A549 (cell line): ENCODE measurements at regions of chr11 and their contacts with region 1.

Region 1: DNA sequence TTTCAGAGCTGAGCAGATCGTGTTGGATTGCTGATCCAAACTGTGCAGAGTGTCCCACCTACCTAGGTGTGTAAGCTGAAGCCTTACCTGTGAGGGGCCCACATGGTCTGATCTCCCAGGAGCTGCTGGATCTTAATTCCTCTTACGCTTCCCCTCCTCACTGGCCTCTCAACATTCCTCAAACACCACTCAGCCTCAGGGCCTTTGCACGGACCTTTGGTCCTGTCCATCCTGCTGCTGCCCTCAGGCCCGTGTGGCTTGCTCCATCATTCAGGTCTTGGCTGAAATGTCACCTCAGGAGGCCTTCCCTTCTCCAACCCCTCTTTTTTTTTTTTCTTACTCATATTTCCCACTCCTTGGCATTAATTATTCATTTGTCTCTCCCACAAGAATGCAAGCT is 21.1 kb upstream of the RAB1B start:
- DNase-seq: no peak
- ATAC-seq: no peak
- H3K4me3 ChIP-seq: no peak overlapping the region
- H3K27ac ChIP-seq: no peak overlapping the region
- H3K4me1 ChIP-seq: no peaks in the 10 kb centered on the region
- CTCF ChIP-seq: no peak
- EP300 ChIP-seq: no peak
- POLR2A ChIP-seq: no peak
- RAD21 ChIP-seq: no peak

Region 2: DNA sequence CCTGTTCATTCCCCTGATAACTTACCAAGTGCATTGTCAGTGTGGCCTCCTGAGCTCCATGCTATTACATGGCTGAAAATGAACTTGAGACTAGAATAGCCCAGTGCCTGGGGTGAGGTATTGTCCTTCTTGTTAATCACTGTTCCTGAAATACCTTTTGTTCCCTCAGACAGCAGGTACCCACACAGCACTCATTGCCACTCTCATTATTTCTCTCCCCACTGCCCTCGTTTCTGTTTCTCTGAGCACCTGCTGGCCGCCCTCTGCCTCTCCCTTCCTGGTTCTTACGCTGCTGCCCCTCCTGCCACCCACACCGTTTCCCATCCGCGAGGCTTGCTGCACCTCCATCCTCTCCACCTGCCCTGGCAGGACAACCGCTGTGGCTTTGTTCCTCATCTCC is 15.7 kb before region 1 on chr11:
- CTCF ChIA-PET with region 1: interaction called, 13 read pairs
- POLR2A ChIA-PET with region 1: no interaction called
- DNase-seq: no peak
- ATAC-seq: no peak
- H3K4me3 ChIP-seq: no peak overlapping the region
- H3K27ac ChIP-seq: no peak overlapping the region
- H3K4me1 ChIP-seq: no peaks in the 10 kb centered on the region
- CTCF ChIP-seq: no peak
- EP300 ChIP-seq: no peak
- POLR2A ChIP-seq: no peak
- RAD21 ChIP-seq: no peak

Region 3: GRCh38 chr11:66363805-66364535 is 116.7 kb after region 1 on chr11:
- CTCF ChIA-PET with region 1: no interaction called
- POLR2A ChIA-PET with region 1: no interaction called
- DNase-seq: peak; percentile 59 to 64
- ATAC-seq: peak; percentile 44 to 75; a peak in 4 of 6 replicates
- H3K4me3 ChIP-seq: no peak overlapping the region
- H3K27ac ChIP-seq: no peak overlapping the region
- H3K4me1 ChIP-seq: no peaks in the 10 kb centered on the region
- CTCF ChIP-seq: peak; percentile 58
- EP300 ChIP-seq: no peak
- POLR2A ChIP-seq: no peak
- RAD21 ChIP-seq: no peak